Left cardiac atrium (tissue), 4 donors: ENCODE measurements at regions of chr18 and their contacts with region 1.

Region 1: DNA sequence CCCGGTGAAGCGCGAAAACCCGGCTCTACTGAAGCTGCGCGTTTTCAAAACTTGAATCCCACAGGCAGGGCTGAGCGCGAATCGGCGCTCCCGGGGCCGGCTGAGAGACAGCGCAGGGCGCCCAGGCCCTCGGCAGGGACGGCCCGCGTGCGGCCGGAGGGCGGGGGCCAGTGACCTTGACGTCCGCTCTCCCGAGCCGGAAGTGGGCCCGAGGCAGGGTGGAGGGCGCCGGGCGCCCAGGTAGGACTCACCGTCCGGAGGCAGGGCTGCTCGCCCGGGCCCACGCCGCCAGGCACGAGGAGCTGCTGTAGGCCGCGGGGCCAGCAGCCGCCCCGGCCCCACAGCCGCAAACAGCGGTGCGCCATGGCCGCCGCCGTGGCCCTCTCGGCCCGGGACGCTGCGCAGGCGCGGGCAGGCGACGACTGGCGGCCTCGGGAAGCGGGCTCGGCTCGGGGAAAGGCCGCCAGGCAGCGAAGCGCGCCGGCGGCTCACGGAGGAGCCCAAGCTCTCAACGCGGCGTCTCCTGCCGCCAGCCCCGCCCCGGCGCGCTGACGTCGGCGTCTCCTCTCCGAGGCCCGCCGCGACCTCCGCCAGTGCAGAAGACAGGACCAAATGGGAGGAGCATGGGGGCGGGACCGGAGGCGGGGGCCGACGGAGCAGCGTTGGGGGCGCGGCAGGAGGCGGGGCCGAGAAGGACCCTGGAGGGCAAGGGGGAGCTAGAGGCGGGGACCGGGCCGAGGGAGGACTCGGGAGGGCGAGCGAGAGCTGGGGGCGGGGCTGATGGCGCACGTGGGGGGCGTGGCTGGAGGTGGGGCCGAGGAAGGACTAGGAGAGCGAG is at the start of gene AFG3L2:
- DNase-seq: peak; percentile 100
- ATAC-seq: peak; percentile 94 to 96
- total RNA-seq, gene AFG3L2: 62.5 to 92.2 TPM

Region 2: GRCh38 chr18:12079491-12080237 is 297.3 kb before region 1 on chr18:
- intact Hi-C with region 1: no loop called
- DNase-seq: no peak
- ATAC-seq: peak in 1 of 2 donors; percentile 58

Region 3: DNA sequence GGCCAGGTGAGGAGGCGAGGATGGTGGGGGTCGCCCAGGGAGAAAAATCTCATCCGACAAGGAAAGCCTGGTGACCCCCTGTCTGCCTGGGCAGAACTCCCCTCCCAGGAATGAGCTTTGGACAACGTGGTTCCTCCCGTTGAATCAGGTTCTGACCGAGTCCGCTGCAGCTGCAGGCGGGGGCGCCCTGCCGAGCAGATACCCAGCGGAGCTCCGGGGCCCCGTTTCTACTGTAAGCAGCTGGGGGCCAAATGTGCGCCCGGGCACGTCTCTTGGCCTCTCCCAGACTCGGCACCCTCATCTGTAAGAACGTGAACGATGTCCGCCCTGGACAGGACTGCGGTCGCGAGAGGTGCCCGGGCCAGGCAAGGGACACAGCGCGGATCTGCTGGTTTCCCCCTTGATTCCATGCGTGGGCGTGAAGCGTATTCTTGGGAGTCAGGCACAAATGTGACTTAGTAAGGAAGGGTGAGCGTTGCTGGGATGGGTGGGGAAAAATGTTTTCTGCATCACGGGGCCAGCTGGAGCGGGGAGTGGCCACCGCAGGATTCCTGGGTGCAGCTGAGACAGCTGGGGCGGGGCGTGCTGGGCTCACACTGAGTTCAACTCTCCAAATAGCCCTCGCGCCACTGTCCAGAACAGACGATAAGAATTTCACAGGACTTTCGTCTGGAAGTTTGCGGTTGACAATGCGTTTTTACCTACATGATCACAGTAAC is 89.1 kb before region 1 on chr18:
- intact Hi-C with region 1: loop called in 1 of 2 experiments (anchors 10 kb)
- DNase-seq: peak; percentile 83
- ATAC-seq: peak; percentile 90 to 95

Region 4: GRCh38 chr18:12327510-12328178 is 49.3 kb before region 1 on chr18:
- intact Hi-C with region 1: loop called in 1 of 2 experiments (anchors 10 kb)
- DNase-seq: peak; percentile 87
- ATAC-seq: peak; percentile 75 to 81

Region 5: GRCh38 chr18:12420831-12421421 is 44.0 kb after region 1 on chr18:
- intact Hi-C with region 1: no loop called
- DNase-seq: no peak
- ATAC-seq: peak; percentile 55 to 66